SK-N-SH (cell line): ENCODE measurements at regions of chr13 and their contacts with region 1.

Region 1: GRCh38 chr13:27826379-27827353 is 34.4 kb downstream of the GSX1 start:
- DNase-seq: peak; percentile 82
- H3K4me3 ChIP-seq: peak overlapping the region; percentile 29 to 58
- H3K27ac ChIP-seq: no peak overlapping the region
- H3K4me1 ChIP-seq: peaks cover 0 to 2% of the 10 kb centered on the region in 2 experiments; a peak in 1 of 4 replicates
- H3K27me3 ChIP-seq: peaks cover 46% of the 10 kb centered on the region
- CTCF ChIP-seq: peak; percentile 92
- EP300 ChIP-seq: no peak
- RAD21 ChIP-seq: peak; percentile 90

Region 2: DNA sequence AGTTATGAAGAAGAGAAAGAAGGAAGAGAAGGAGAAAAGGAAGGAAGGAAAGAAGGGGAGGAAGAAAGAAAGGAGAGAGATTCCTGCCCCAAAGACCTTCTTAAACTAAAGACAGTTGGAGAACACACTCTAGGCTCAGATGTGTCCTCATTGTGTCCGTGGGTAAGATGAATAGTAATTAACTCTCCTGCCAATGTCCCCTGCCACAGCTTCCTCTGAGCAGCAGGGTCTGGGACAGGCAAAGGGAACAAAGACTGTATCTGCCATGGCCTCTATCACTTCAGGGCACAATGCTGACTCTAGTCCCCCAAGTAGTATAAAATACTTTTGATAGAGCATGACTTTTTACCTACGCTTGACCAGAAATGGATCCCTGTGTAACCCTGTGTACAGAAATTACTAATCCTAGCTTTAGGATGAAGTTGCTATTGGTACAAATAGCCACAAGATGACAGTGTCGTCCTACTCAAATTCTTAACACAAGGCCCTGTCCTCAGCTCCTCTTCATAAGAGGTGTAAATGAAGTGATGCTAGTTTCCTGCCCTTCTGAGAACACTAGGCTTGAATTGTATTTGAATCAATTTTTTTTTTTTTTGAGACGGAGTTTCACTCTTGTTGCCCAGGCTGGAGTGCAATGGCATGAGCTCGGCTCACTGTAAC is 879.9 kb before region 1 on chr13:
- CTCF ChIA-PET with region 1: interaction called, 11 read pairs
- POLR2A ChIA-PET with region 1: no interaction called
- DNase-seq: peak; percentile 48
- H3K4me3 ChIP-seq: no peak overlapping the region
- H3K27ac ChIP-seq: no peak overlapping the region
- H3K4me1 ChIP-seq: no peaks in the 10 kb centered on the region
- H3K27me3 ChIP-seq: no peaks in the 10 kb centered on the region
- CTCF ChIP-seq: peak; percentile 80
- EP300 ChIP-seq: no peak
- RAD21 ChIP-seq: peak; percentile 90

Region 3: DNA sequence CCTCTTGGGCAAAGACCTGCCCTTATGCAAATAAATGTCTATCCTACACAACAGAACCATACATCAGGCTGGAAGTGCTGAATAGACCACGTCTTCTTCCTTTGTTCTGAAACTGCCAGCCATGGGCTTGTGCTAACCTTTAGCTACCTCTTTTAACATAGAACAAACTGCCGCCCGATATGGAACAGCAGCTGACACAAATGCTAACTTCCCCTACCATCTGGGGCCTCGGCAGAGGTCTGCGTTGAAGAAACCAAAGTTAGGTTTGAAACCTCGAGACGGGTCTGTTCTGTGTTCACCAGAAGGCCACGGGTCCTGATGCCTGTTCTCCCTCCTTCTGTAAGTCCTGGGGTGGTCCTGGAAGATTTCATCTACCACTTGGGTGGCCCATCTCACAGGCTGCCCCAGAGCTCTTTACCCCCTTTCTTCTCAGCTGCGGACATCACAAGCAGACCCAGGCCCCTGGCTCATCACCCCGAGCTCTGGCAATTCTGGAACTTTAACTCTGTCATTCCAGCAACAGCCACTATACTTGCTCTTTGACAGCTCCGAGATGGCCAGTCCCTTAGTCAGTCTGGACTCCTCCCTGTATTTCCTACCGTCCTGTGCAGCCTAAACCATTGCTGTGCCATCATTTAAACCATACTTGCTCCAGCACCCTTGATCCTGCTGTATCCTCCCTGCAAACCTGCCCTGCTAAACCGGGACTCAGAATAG is 801.7 kb before region 1 on chr13:
- CTCF ChIA-PET with region 1: no interaction called
- POLR2A ChIA-PET with region 1: no interaction called
- DNase-seq: no peak
- H3K4me3 ChIP-seq: no peak overlapping the region
- H3K27ac ChIP-seq: no peak overlapping the region
- H3K4me1 ChIP-seq: peaks cover 0 to 5% of the 10 kb centered on the region in 2 experiments; a peak in 1 of 4 replicates
- H3K27me3 ChIP-seq: no peaks in the 10 kb centered on the region
- CTCF ChIP-seq: no peak
- EP300 ChIP-seq: no peak
- RAD21 ChIP-seq: no peak

Region 4: DNA sequence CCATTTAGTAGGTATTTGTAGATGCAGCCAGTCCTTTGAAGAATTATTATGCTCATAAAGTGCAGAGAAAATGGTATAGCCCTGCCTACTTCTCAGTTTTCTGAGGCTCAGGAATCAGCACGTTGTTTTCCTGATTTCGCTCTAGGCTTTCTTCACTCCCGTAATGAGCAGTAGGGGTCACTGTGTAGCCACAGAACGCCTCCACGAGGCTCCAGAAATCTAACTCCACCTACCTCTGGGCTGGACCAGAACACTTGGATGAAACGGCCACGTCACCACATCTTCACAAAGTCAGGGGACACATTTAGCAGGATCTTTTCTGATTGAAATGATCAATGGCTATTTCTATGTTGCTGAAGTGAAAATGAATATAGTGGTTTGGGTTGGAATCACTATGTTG is 452.0 kb before region 1 on chr13:
- CTCF ChIA-PET with region 1: interaction called, 186 read pairs
- POLR2A ChIA-PET with region 1: no interaction called
- DNase-seq: peak; percentile 75
- H3K4me3 ChIP-seq: no peak overlapping the region; a peak in 1 of 4 replicates
- H3K27ac ChIP-seq: no peak overlapping the region
- H3K4me1 ChIP-seq: no peaks in the 10 kb centered on the region
- H3K27me3 ChIP-seq: peaks cover 62% of the 10 kb centered on the region
- CTCF ChIP-seq: peak; percentile 75
- EP300 ChIP-seq: no peak
- RAD21 ChIP-seq: peak; percentile 82

Region 5: DNA sequence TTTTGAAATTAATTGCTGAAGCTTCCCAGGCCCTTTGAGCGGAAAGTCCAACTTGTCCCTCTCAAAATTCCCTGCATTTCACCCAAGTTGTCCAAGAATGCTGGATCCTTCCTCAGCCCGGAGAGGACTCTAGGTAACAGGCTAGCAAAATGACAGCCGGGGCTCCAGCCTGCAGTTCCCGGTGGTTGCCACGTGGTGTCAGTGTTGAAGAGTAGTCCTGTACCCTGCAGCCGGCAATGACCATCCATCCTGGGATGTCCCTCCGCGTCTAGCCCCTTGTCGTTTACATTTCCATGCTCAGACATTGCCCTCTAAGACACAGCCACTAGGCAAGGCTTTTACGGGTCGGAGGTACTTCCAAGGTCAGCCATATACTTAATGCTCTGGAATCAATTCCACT is 344.9 kb before region 1 on chr13:
- CTCF ChIA-PET with region 1: interaction called, 25 read pairs
- POLR2A ChIA-PET with region 1: no interaction called
- DNase-seq: peak; percentile 65
- H3K4me3 ChIP-seq: peak overlapping the region in 1 of 2 experiments; percentile 25; a peak in 2 of 4 replicates
- H3K27ac ChIP-seq: no peak overlapping the region
- H3K4me1 ChIP-seq: no peaks in the 10 kb centered on the region
- H3K27me3 ChIP-seq: peaks cover 57% of the 10 kb centered on the region
- CTCF ChIP-seq: peak; percentile 54
- EP300 ChIP-seq: no peak
- RAD21 ChIP-seq: peak; percentile 47; the same call in 1 of the 2 replicates

Region 6: GRCh38 chr13:27556109-27556508 is 270.6 kb before region 1 on chr13:
- CTCF ChIA-PET with region 1: interaction called, 19 read pairs
- POLR2A ChIA-PET with region 1: no interaction called
- DNase-seq: no peak
- H3K4me3 ChIP-seq: no peak overlapping the region
- H3K27ac ChIP-seq: no peak overlapping the region
- H3K4me1 ChIP-seq: peaks cover 0 to 9% of the 10 kb centered on the region in 2 experiments; a peak in 2 of 4 replicates
- H3K27me3 ChIP-seq: no peaks in the 10 kb centered on the region
- CTCF ChIP-seq: peak; percentile 63
- EP300 ChIP-seq: no peak
- RAD21 ChIP-seq: peak; percentile 48

Region 7: DNA sequence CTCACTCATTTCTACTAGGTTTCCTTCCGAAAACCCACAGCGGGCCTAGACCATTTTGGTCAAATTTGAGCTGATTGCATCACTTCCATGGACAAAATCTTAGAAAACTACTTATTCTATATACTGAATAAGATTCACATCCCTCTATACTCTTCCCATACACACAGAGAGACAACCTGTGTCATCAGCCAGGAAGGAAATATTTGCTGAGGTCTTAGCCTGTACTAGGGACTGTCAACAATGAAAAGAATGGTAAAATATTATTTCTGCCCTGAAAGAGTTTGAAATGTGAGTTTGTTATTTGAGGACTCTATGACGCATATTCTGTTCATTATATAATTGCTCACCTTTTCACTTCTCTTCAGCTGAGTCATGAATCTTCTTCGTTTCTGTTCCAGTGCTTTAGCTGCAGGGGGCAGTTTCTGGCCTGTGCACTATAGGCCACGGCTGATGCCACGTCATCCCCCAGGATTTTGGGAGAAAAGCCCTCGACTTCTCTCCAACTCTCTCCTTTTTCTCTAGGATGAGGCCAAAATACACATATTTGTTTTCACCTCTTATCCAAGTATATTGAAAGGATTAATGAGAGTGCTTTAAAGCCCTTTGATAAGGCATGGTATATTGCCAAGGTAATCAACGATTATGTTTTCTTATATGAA is 13.3 kb after region 1 on chr13:
- CTCF ChIA-PET with region 1: interaction called, 12 read pairs
- POLR2A ChIA-PET with region 1: no interaction called
- DNase-seq: no peak
- H3K4me3 ChIP-seq: no peak overlapping the region
- H3K27ac ChIP-seq: no peak overlapping the region
- H3K4me1 ChIP-seq: no peaks in the 10 kb centered on the region
- H3K27me3 ChIP-seq: peaks cover 1% of the 10 kb centered on the region; the same call in 1 of the 2 replicates
- CTCF ChIP-seq: no peak
- EP300 ChIP-seq: no peak
- RAD21 ChIP-seq: no peak

Region 8: DNA sequence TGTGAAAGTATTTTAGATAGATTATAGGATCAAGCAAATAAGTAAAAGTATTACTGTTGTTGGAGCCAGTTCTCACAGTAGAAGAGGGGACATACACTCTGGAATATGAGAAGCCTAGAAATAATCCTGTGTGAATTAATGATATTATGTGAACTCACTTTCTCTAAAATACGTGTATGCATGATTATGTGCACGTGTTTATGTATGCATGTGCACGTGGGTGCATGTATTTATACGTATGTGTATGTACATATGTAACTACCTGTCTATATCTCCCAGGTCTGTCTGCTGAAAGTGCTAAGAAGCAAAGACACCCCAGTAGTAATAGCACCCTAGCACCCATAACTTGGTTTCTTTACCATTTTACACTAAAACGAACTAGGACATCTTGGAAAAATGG is 51.6 kb after region 1 on chr13:
- CTCF ChIA-PET with region 1: no interaction called
- POLR2A ChIA-PET with region 1: no interaction called
- DNase-seq: no peak
- H3K4me3 ChIP-seq: no peak overlapping the region
- H3K27ac ChIP-seq: no peak overlapping the region
- H3K4me1 ChIP-seq: no peaks in the 10 kb centered on the region
- H3K27me3 ChIP-seq: peaks cover 6% of the 10 kb centered on the region; the same call in 1 of the 2 replicates
- CTCF ChIP-seq: no peak
- EP300 ChIP-seq: no peak
- RAD21 ChIP-seq: no peak

Region 9: GRCh38 chr13:27965740-27966640 is 139.3 kb after region 1 on chr13:
- CTCF ChIA-PET with region 1: interaction called, 11 read pairs
- POLR2A ChIA-PET with region 1: no interaction called
- DNase-seq: peak; percentile 64
- H3K4me3 ChIP-seq: no peak overlapping the region
- H3K27ac ChIP-seq: no peak overlapping the region
- H3K4me1 ChIP-seq: no peaks in the 10 kb centered on the region
- H3K27me3 ChIP-seq: peaks cover 86% of the 10 kb centered on the region
- CTCF ChIP-seq: no peak
- EP300 ChIP-seq: no peak
- RAD21 ChIP-seq: no peak

Region 10: GRCh38 chr13:28106976-28107375 is 280.3 kb after region 1 on chr13:
- CTCF ChIA-PET with region 1: no interaction called
- POLR2A ChIA-PET with region 1: no interaction called
- DNase-seq: no peak
- H3K4me3 ChIP-seq: no peak overlapping the region
- H3K27ac ChIP-seq: no peak overlapping the region
- H3K4me1 ChIP-seq: no peaks in the 10 kb centered on the region
- H3K27me3 ChIP-seq: peaks cover 43% of the 10 kb centered on the region
- CTCF ChIP-seq: no peak
- EP300 ChIP-seq: no peak
- RAD21 ChIP-seq: no peak

Region 11: DNA sequence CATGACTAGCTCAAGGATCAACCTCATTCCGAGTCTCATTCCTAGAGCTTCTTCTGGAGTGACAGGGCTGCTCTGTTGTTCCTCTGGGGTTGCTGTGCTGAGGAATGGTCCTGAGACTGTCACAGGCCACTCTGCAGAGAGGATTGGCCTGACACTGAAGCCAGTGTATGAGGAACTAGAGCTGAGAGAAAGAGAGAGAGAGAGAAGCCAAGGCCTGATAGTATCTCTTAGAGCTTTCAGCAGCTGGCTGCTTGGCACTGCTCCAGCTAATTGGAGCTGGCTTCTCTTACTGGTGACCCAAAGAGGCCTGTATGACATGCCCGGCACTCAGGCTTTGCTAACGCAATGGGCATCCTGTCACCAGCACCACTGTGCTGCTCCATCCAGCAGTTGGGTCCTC is 741.6 kb after region 1 on chr13:
- CTCF ChIA-PET with region 1: no interaction called
- POLR2A ChIA-PET with region 1: no interaction called
- DNase-seq: peak; percentile 46
- H3K4me3 ChIP-seq: no peak overlapping the region
- H3K27ac ChIP-seq: no peak overlapping the region
- H3K4me1 ChIP-seq: peaks cover 0 to 7% of the 10 kb centered on the region in 2 experiments; a peak in 1 of 4 replicates
- H3K27me3 ChIP-seq: no peaks in the 10 kb centered on the region
- CTCF ChIP-seq: no peak
- EP300 ChIP-seq: 0 out of 4 replicates have a peak, but pooled peaks of 1 of the 2 experiments have one; percentile 18
- RAD21 ChIP-seq: no peak